ENCODE measurements at regions of chr3 and their contacts with region 1.

Region 1: DNA sequence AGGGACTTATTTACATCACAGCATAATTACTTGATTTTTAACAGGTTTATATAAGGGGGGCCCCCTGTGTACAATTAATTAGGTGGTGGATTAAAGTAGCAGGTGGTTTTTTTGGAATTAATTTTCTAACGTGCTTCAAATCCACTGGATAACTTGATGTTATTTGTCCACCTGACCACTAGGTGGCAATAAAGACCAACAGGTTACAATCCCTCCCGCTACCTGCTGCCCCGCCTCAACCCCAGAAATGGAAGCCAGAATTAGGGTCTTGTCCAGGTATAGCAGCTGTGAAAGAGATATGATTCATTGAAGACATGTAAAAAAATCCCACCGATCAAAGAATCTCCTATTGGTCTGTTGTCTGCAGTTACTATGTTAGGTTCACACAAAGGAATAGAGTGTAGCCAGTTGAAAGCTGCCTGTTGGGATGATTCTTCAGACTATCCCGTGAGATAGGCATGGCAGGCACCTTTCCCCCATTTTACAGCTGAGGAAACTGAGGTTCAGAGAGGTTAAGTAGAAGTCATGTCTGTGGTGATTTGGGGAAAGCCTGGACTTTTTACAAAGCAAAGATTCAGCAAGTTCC is 44.0 kb downstream of the MFSD1 start:
- DNase-seq: peak; percentile 65
- H3K4me3 Mint-ChIP-seq: no peak overlapping the region
- H3K27ac Mint-ChIP-seq: no peak overlapping the region
- H3K4me1 Mint-ChIP-seq: no peaks in the 10 kb centered on the region
- H3K27me3 Mint-ChIP-seq: no peaks in the 10 kb centered on the region
- CTCF ChIP-seq: peak; percentile 93

Region 2: GRCh38 chr3:158544811-158545210 is 301.0 kb before region 1 on chr3:
- CTCF ChIA-PET with region 1: no interaction called
- intact Hi-C with region 1: no loop called
- DNase-seq: no peak
- H3K4me3 Mint-ChIP-seq: no peak overlapping the region
- H3K27ac Mint-ChIP-seq: no peak overlapping the region
- H3K4me1 Mint-ChIP-seq: no peaks in the 10 kb centered on the region
- H3K27me3 Mint-ChIP-seq: no peaks in the 10 kb centered on the region
- CTCF ChIP-seq: no peak

Region 3: GRCh38 chr3:159586571-159587202 is 740.8 kb after region 1 on chr3:
- CTCF ChIA-PET with region 1: no interaction called
- intact Hi-C with region 1: loop called (anchors 5 kb)
- DNase-seq: peak; percentile 61
- H3K4me3 Mint-ChIP-seq: no peak overlapping the region
- H3K27ac Mint-ChIP-seq: no peak overlapping the region
- H3K4me1 Mint-ChIP-seq: peaks cover 9% of the 10 kb centered on the region
- H3K27me3 Mint-ChIP-seq: peaks cover 23% of the 10 kb centered on the region
- CTCF ChIP-seq: peak; percentile 80